ENCODE measurements at regions of chr2 and their contacts with region 1.

Region 1: DNA sequence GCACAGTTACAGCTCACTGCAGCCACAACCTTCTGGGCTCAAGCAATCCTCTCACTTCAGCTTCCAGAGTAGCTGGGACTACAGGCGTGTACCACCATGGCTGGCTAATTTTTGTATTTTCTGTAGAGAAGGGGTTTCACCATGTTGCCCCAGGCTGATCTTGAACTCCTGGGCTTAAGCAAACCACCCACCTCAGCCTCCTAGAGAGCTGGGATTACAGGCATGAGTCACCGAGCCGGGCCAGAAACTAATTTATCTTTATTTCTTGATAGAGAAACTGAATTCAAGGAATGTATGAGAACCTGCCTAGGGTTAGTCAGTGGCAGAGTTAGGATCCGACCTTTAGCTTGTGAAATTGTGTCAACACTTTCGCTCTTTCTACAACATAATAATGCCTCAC is 19.3 kb upstream of the ITGAV start:
- DNase-seq: no peak
- H3K4me3 ChIP-seq: no peak overlapping the region
- CTCF ChIP-seq: no peak

Region 2: GRCh38 chr2:186518945-186519344 is 51.6 kb before region 1 on chr2:
- in situ Hi-C with region 1: loop called (anchors 5 kb)
- DNase-seq: peak; percentile 42
- H3K4me3 ChIP-seq: no peak overlapping the region
- CTCF ChIP-seq: no peak

Measured in astrocyte of the cerebellum (primary cell).